Naive thymus-derived CD4-positive, alpha-beta T cell (primary cell): ENCODE measurements at regions of chr5 and their contacts with region 1.

Region 1: DNA sequence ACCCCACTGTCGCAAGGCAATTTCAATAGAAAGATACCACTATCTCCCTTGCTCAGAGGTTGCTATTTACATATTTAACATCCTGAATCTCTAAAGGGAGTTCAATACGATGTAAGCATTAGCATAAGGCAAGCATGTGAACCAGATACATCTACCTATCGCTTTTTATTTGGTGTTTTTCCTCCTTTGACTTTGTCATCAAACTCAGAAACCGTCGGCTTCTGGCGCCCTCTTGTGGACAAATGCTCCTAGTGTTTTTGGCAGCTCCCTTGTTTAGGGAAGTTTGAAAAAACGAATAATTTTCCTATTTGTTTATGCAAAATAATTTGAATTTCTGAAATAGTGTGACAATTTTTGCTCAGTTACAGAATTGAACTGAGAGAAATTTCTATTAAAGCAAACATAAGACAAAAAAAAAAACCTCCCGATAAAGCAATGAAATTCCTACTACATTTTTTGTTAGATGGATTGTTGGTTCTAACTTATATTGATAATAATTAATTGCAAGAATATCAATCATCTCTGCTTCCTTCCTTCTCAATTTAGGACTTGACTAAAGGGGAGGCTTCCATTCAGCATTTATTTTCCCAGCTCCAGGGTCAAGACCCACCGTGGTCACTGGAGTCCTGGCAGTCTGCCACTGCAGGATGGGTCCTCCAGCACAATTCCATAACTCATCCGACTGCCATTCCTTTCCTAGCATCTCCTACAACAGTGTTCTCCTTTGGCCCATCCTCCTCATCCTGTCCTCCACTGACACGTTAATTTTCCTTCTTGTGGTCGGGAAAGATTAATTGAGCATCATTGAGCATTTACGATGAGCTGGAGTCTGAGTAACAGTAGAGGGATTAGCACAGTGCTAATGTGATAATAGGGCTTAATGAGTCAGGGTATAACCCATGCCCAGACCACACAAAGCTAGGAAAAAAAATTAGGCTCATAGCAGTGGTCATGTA is 131.8 kb upstream of the CHD1 start:
- DNase-seq: peak; percentile 66 to 86 (median 80)
- ATAC-seq: peak; percentile 87
- H3K4me3 ChIP-seq: no peak overlapping the region
- H3K4me3 Mint-ChIP-seq: peak overlapping the region in 5 of 10 donors; percentile 7 to 53 (median 29)
- H3K27ac ChIP-seq: no peak overlapping the region
- H3K27ac Mint-ChIP-seq: no peak overlapping the region
- H3K4me1 ChIP-seq: peaks cover 0 to 4% of the 10 kb centered on the region in 2 donors
- H3K4me1 Mint-ChIP-seq: peaks cover 0 to 18% (median 9%) of the 10 kb centered on the region in 7 donors
- H3K27me3 ChIP-seq: no peaks in the 10 kb centered on the region
- H3K27me3 Mint-ChIP-seq: peaks cover 0 to 20% (median 4%) of the 10 kb centered on the region in 5 donors

Region 2: GRCh38 chr5:97231025-97231636 is 1829.5 kb before region 1 on chr5:
- CTCF ChIA-PET with region 1: no interaction called
- POLR2A ChIA-PET with region 1: no interaction called
- intact Hi-C with region 1: loop called in 1 of 2 experiments (anchors 10 kb)
- DNase-seq: peak in 7 of 9 donors; percentile 19 to 58 (median 43)
- ATAC-seq: peak; percentile 73
- H3K4me3 ChIP-seq: no peak overlapping the region
- H3K4me3 Mint-ChIP-seq: no peak overlapping the region
- H3K27ac ChIP-seq: no peak overlapping the region
- H3K27ac Mint-ChIP-seq: no peak overlapping the region
- H3K4me1 ChIP-seq: no peaks in the 10 kb centered on the region
- H3K4me1 Mint-ChIP-seq: peaks cover 0 to 5% (median 0%) of the 10 kb centered on the region in 7 donors
- H3K27me3 ChIP-seq: no peaks in the 10 kb centered on the region
- H3K27me3 Mint-ChIP-seq: peaks cover 0 to 13% (median 0%) of the 10 kb centered on the region in 5 donors

Region 3: GRCh38 chr5:98905857-98906690 is 154.5 kb before region 1 on chr5:
- CTCF ChIA-PET with region 1: interaction called, 52 read pairs
- POLR2A ChIA-PET with region 1: interaction called, 9 read pairs
- intact Hi-C with region 1: loop called (anchors 1 kb)
- DNase-seq: peak in 7 of 9 donors; percentile 32 to 73 (median 64)
- ATAC-seq: peak; percentile 87
- H3K4me3 ChIP-seq: no peak overlapping the region
- H3K4me3 Mint-ChIP-seq: peak overlapping the region in 2 of 10 donors; percentile 2 to 3
- H3K27ac ChIP-seq: peak overlapping the region; percentile 31
- H3K27ac Mint-ChIP-seq: peak overlapping the region in 8 of 9 donors; percentile 1 to 77 (median 34)
- H3K4me1 ChIP-seq: peaks cover 10 to 12% of the 10 kb centered on the region in 2 donors
- H3K4me1 Mint-ChIP-seq: peaks cover 29 to 68% (median 53%) of the 10 kb centered on the region in 7 donors
- H3K27me3 ChIP-seq: no peaks in the 10 kb centered on the region
- H3K27me3 Mint-ChIP-seq: no peaks in the 10 kb centered on the region

Region 4: DNA sequence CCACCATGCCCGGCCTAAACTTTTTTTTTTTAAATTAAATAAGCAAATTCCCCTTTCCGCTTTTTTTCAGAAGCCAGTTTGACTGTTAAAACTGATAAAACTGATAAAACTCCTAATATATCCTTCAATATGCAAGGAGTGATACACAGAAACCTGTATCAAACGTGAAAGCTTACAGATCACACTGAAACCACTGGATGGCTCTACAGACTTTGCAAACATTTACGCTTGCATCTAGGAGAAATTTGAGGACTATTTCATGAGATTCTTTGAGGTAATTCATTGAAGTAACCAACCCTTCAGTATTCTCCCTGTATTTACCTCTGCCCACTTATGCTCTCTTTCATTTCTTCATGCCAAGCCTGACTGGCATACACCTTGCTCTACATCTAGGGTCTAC is 91.2 kb before region 1 on chr5:
- CTCF ChIA-PET with region 1: interaction called, 3 read pairs
- POLR2A ChIA-PET with region 1: no interaction called
- intact Hi-C with region 1: loop called (anchors 1 to 5 kb)
- DNase-seq: no peak
- ATAC-seq: no peak
- H3K4me3 ChIP-seq: no peak overlapping the region
- H3K4me3 Mint-ChIP-seq: no peak overlapping the region
- H3K27ac ChIP-seq: no peak overlapping the region
- H3K27ac Mint-ChIP-seq: no peak overlapping the region
- H3K4me1 ChIP-seq: no peaks in the 10 kb centered on the region
- H3K4me1 Mint-ChIP-seq: peaks cover 0 to 3% (median 0%) of the 10 kb centered on the region in 7 donors
- H3K27me3 ChIP-seq: no peaks in the 10 kb centered on the region
- H3K27me3 Mint-ChIP-seq: peaks cover 0 to 6% (median 0%) of the 10 kb centered on the region in 5 donors

Region 5: DNA sequence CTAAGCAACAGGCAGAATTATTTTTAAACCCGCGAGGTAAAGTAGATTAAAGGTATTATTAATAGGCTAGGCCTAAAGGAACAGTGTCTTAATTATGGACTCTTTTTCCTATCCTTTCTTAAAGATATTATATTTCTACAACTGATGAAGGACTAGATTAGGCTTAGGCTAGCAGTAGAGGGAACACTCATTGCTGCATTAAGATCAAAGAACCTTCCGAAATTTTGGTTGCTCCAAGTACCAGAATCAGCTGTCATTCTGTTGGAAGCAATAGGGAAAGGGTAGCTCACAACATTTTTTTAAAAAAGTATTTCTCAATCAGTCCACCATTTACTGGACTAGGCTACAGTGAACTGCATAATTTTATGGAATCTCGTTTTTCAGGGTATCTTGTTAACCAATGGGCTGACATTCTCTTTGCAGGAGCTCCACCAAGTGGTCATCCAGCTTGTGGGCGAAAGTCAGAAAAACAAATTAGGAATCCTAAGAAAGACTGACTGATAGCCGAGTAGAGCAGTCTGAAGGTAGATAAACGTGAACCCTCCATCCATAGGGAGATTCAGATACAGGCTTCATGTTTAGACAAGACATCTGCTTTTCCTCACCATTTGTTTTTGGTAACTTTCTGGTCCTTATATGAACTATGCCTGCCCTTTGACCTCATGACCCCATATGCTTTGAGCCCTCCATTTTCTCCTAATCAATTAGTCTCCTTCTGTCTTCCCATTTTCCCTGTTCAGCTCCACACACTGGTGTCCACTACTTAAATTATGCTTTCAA is 28.2 kb before region 1 on chr5:
- CTCF ChIA-PET with region 1: interaction called, 15 read pairs
- POLR2A ChIA-PET with region 1: interaction called, 8 read pairs
- intact Hi-C with region 1: loop called (anchors 1 kb)
- DNase-seq: peak in 3 of 9 donors; percentile 22 to 43 (median 38)
- ATAC-seq: peak; percentile 49
- H3K4me3 ChIP-seq: peak overlapping the region; percentile 43
- H3K4me3 Mint-ChIP-seq: peak overlapping the region; percentile 71 to 97 (median 88)
- H3K27ac ChIP-seq: peak overlapping the region; percentile 70
- H3K27ac Mint-ChIP-seq: peak overlapping the region; percentile 85 to 98 (median 96)
- H3K4me1 ChIP-seq: peaks cover 30 to 31% of the 10 kb centered on the region in 2 donors
- H3K4me1 Mint-ChIP-seq: peaks cover 32 to 87% (median 79%) of the 10 kb centered on the region in 7 donors
- H3K27me3 ChIP-seq: no peaks in the 10 kb centered on the region
- H3K27me3 Mint-ChIP-seq: no peaks in the 10 kb centered on the region

Region 6: DNA sequence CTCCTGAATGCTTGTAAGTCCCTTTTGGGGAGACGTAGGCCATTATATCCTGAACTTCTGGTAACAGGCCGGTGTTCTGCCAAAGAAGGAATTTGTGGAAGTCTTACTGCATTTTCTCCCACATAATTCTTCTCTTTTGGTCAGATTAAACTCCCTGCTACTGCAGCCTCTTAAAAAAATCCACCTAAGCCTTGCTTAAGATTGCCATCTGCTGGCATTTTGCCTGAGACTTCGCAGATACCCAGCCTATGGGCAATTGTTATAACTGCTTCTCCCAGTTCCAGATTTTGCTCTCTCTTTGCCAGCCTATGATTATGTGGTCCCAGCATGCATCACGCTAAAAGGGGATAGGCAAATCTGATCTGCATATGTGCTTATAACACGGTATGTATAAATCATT is 259.9 kb after region 1 on chr5:
- CTCF ChIA-PET with region 1: no interaction called
- POLR2A ChIA-PET with region 1: no interaction called
- intact Hi-C with region 1: no loop called
- DNase-seq: no peak
- ATAC-seq: no peak
- H3K4me3 ChIP-seq: no peak overlapping the region
- H3K4me3 Mint-ChIP-seq: no peak overlapping the region
- H3K27ac ChIP-seq: no peak overlapping the region
- H3K27ac Mint-ChIP-seq: no peak overlapping the region
- H3K4me1 ChIP-seq: no peaks in the 10 kb centered on the region
- H3K4me1 Mint-ChIP-seq: no peaks in the 10 kb centered on the region
- H3K27me3 ChIP-seq: no peaks in the 10 kb centered on the region
- H3K27me3 Mint-ChIP-seq: no peaks in the 10 kb centered on the region